ENCODE measurements at regions of chr19 and their contacts with region 1.

Region 1: DNA sequence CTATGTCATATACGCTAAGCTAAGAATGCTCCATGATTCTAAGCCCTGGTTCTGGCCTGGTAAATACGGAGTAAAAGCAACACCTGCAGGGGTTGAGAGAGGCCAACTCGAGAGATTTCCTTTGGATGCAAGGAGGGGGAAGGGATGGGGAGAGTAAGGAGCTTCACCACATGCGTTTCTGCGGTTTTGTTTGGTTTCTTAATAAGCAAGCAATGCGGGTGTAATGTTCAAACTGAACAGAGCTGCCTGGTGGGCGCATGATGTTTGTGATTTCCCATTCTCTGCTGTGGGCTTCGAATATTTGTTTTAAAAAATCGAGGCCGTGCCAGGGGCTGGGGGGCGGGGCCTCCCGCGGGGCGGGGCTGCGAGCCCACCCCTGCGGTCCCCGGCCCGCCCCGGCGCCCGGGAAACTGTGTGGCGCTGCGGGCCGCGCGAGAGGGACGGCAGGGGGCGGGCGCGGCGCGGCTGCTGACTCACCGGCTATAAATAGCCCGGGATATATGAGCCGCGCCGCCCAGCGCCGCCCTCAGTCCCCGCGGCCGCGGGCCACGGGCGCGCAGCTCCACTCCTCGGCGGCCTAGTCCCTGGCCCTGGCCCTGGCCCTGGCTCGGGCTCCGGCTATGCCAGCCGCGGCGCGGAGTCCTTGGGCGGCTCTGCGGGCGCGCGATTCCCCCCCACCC is 5.1 kb downstream of the BBC3 start:
- DNase-seq: peak; percentile 84
- H3K4me3 ChIP-seq: peak overlapping the region in 1 of 3 experiments; percentile 31
- H3K27ac ChIP-seq: peak overlapping the region; percentile 61
- H3K4me1 ChIP-seq: peaks cover 22% of the 10 kb centered on the region
- H3K27me3 ChIP-seq: no peaks in the 10 kb centered on the region
- CTCF ChIP-seq: peak in 1 of 2 donors; percentile 6
- POLR2A ChIP-seq: peak; percentile 100

Region 2: DNA sequence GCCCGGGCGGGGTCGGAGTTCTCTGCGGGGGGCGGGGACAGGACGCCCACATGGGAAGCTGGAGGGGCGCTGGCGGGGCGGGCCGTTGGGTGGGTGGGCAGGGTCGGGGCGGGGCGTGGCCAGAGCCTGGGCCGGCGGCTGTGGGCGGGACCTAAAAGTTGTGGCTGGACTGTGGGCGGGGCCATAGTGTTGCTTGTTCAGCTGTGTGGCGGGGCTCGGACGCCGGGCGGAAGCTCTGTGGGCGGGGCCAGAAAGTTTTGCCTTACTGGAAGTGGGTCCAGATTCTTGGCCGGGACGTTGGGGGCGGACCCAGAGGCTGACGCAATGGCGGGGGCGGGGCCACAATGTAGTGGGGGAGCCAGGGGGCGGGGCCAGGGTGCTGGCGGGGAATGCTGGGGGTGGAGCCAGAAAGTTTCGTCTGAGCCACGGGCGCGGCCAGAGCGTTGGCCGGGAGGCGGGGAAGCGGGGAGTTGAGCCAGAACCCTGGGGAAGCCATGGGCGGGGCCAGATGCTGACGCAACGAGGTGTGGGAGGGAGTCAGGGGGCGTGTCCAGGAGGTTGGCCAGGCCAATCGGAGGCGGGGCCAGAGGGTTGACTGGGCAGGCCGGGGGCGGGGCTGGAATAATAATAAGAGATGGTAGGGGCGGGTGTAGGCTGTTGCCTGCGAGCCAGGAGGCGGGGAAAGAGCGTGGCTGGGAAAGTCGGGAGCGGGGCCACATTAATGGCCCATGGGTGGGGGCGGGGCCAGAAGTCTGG is 31.0 kb after region 1 on chr19:
- CTCF ChIA-PET with region 1: interaction called, 4 read pairs
- POLR2A ChIA-PET with region 1: interaction called, 31 read pairs
- dilution Hi-C with region 1: no loop called
- intact Hi-C with region 1: loop called (anchors 1 kb)
- DNase-seq: peak; percentile 99
- H3K4me3 ChIP-seq: peak overlapping the region in 2 of 3 experiments; percentile 34 to 73
- H3K27ac ChIP-seq: peak overlapping the region; percentile 96
- H3K4me1 ChIP-seq: peaks cover 11% of the 10 kb centered on the region
- H3K27me3 ChIP-seq: no peaks in the 10 kb centered on the region
- CTCF ChIP-seq: no peak
- POLR2A ChIP-seq: no peak

Region 3: DNA sequence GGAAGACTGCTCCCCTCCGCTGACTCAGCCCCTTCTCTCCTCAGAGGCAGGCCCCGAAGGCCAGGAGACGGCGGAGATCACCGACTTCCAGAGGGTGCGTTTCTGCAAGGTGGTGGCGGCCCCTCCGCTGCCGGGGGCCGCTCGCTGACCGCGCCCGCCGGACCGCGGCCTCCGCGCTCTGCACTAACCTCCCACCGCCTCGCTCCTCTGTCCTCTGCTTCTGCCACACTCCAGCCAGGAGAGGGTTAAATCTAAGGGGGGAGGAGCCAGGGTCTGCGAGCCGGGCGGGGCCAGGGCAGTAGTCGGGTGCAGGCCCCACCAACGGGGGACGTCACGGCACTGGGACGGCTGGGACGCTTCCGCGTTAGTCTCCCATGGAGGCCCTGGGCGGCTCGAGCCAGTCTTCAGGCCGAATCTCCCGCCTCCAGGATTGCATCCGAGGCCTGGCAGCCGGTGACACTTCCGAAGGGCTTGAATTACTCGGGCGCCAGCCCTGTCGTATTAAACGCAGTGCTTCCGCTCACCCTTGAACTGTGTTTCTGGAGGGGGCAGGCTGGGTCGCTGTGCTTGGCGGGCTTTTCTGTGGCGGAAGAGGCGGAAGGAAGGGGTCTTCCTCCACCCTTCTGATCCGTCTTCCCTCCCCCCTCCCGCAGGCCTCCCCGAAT is 47.6 kb after region 1 on chr19:
- CTCF ChIA-PET with region 1: interaction called, 3 read pairs
- POLR2A ChIA-PET with region 1: no interaction called
- dilution Hi-C with region 1: no loop called
- intact Hi-C with region 1: loop called (anchors 1 kb)
- DNase-seq: peak; percentile 91
- H3K4me3 ChIP-seq: peak overlapping the region; percentile 16 to 67 (median 64)
- H3K27ac ChIP-seq: peak overlapping the region; percentile 92
- H3K4me1 ChIP-seq: peaks cover 13% of the 10 kb centered on the region
- H3K27me3 ChIP-seq: no peaks in the 10 kb centered on the region
- CTCF ChIP-seq: no peak
- POLR2A ChIP-seq: peak; percentile 75